Caco-2 (cell line): ENCODE measurements at regions of chr1 and their contacts with region 1.

Region 1: DNA sequence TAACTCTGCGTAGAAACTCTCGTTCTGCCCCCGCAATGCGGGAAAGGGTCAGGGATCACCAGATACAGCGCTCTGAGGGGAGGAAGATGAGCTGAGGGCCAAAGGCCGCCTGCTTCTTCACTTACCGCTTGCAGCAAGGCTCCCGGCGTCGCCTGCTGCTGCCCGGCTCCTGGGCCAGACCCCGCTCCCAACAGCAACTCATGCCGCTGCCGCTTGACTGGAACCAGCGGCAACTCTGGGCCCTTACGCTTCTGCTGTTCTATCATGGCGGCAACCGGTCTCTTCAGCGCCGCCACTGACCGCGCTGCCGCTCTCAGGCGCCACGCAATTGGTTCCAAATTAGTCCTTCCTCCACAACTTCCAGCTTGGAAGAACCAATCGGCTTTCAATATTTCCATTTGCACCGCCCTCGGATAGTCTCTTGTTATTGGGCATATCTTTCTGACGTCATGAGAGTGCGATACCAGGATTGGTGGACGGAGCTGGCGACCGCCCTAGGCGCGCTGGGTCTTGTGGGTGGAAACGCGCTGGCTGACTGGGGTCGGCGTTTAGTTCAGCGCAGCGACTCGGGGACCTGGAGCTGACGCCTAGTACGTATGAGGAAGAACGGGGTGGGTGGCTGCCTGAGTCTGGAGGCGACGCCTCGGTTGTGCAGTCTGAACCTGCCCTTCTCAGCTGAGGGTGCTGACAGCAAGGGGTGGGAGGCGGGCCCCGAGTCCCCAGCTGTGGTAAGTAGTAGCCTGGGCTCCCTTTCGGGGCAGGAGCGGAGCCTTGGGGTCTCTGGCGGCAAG is at the starts of genes SNRNP40 and ZCCHC17:
- DNase-seq: peak; percentile 92 to 96
- H3K4me3 ChIP-seq: peak within 1 kb of the TSS; percentile 74
- H3K4me3 Mint-ChIP-seq: no peak within 1 kb of the TSS
- H3K27ac Mint-ChIP-seq: no peak within 1 kb of the TSS
- H3K4me1 ChIP-seq: no peaks in the 10 kb centered on the region
- H3K4me1 Mint-ChIP-seq: peaks cover 9% of the 10 kb centered on the region
- H3K27me3 ChIP-seq: no peaks in the 10 kb centered on the region
- H3K27me3 Mint-ChIP-seq: no peaks in the 10 kb centered on the region
- CTCF ChIP-seq: no peak
- total RNA-seq, gene SNRNP40: 49.5 and 56.5 TPM in 2 replicates
- total RNA-seq, gene ZCCHC17: 21.4 and 24.1 TPM in 2 replicates

Region 2: DNA sequence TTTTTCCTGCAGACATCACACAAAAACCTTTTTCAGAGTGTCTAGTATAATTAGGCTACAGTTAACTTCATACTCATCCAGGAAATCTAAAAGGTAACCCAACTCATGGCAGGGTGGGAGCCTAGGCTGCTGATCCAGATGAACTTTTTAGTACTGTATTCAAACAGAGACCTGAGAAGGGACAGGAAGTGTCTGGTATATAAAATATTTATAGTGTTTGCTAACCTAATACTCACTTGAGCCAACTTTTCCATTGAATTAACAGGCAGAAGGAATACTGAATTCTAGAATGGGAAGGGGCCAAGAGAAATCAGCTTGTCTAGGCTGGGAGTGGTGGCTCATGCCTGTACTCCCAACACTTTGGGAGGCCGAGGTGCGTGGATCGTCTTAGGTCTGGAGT is 34.8 kb before region 1 on chr1:
- CTCF ChIA-PET with region 1: no interaction called
- POLR2A ChIA-PET with region 1: interaction called, 11 read pairs
- intact Hi-C with region 1: no loop called
- DNase-seq: no peak
- H3K4me3 ChIP-seq: no peak overlapping the region
- H3K4me3 Mint-ChIP-seq: no peak overlapping the region
- H3K27ac Mint-ChIP-seq: no peak overlapping the region
- H3K4me1 ChIP-seq: no peaks in the 10 kb centered on the region
- H3K4me1 Mint-ChIP-seq: no peaks in the 10 kb centered on the region
- H3K27me3 ChIP-seq: no peaks in the 10 kb centered on the region
- H3K27me3 Mint-ChIP-seq: no peaks in the 10 kb centered on the region
- CTCF ChIP-seq: no peak

Region 3: DNA sequence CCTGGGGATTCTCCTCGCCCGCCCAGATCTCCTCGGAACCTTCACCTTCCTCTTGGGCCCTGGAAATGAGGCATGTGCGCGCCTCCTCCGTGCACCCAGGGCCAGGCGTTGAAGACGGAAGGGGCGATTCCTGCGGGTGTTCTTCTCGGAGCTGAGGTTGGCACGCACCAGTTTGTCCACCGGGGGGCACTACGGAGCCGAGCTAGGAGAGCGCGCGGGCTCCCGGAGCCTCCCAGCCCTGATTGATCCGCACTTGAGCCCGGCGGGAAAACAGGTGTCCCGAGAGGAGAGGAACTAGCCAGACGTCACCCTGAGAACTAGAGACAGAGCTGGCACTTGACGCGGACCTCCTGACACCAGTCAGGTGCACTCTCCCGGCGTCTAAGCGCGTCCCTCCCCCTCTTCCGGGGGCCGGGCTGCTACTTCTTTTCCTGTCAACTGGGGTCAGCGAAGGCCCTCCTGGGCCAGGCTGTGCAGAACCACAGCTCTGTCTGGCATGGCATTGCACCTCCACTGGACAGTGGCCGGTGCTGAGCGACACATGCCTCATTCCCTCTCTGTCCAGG is 98.0 kb after region 1 on chr1:
- CTCF ChIA-PET with region 1: no interaction called
- POLR2A ChIA-PET with region 1: interaction called, 11 read pairs
- intact Hi-C with region 1: no loop called
- DNase-seq: peak; percentile 71 to 78
- H3K4me3 ChIP-seq: no peak overlapping the region
- H3K4me3 Mint-ChIP-seq: peak overlapping the region; percentile 63
- H3K27ac Mint-ChIP-seq: no peak overlapping the region
- H3K4me1 ChIP-seq: peaks cover 32% of the 10 kb centered on the region
- H3K4me1 Mint-ChIP-seq: peaks cover 14% of the 10 kb centered on the region
- H3K27me3 ChIP-seq: no peaks in the 10 kb centered on the region
- H3K27me3 Mint-ChIP-seq: no peaks in the 10 kb centered on the region
- CTCF ChIP-seq: peak; percentile 32 to 58

Region 4: DNA sequence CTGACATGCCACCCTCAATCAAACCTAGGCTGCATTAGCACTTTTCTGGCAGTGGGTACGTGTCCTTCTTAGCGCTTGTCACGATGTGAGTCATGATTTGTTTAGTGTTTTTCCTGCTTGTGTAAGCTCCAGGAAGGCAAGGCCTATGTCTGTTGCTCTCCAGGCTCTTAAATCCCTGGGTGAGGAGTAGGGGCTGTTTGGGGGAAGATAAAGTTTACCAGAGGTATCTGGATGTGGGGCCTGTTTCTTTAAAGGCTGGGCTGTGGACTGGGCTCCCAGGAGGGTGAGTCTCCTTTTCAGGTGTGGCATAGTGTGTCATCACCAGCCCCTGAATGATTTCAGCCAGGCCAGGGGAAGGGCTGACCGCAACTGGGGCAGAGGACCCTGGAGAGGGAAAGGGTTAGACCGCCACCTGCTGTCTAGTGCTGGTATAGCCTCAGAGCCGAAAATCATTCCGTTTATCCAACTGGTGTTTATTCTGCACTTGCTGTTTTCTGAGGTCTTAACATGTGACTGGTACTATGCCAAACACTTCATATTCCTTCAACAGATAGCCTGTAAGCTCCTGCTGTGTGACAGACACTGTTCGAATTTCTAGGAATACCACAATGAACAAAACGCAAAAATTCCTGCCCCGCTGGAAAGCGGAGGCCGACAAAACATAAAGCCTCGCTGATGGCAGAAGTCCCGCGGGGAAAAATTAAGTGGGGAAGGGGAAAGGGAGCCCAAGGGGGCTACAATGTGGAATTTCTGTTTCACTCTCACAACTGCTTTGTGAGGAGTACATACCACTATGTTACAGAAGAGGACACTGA is 126.0 kb after region 1 on chr1:
- CTCF ChIA-PET with region 1: no interaction called
- POLR2A ChIA-PET with region 1: no interaction called
- intact Hi-C with region 1: loop called (anchors 10 kb)
- DNase-seq: peak; percentile 70 to 77
- H3K4me3 ChIP-seq: no peak overlapping the region
- H3K4me3 Mint-ChIP-seq: no peak overlapping the region
- H3K27ac Mint-ChIP-seq: peak overlapping the region; percentile 82
- H3K4me1 ChIP-seq: peaks cover 3% of the 10 kb centered on the region; the same call in 1 of the 2 replicates
- H3K4me1 Mint-ChIP-seq: no peaks in the 10 kb centered on the region
- H3K27me3 ChIP-seq: no peaks in the 10 kb centered on the region
- H3K27me3 Mint-ChIP-seq: no peaks in the 10 kb centered on the region
- CTCF ChIP-seq: peak; percentile 71 to 78